B cell (primary cell): ENCODE measurements at regions of chr12 and their contacts with region 1.

Region 1: GRCh38 chr12:30847259-30847658 is 79.3 kb upstream of the TSPAN11 start:
- DNase-seq: peak; percentile 71
- ATAC-seq: no peak
- H3K4me3 ChIP-seq: no peak overlapping the region
- H3K4me3 Mint-ChIP-seq: no peak overlapping the region
- H3K27ac ChIP-seq: no peak overlapping the region
- H3K27ac Mint-ChIP-seq: no peak overlapping the region
- H3K4me1 ChIP-seq: peaks cover 5 to 16% of the 10 kb centered on the region in 2 donors
- H3K4me1 Mint-ChIP-seq: peaks cover 10% of the 10 kb centered on the region
- H3K27me3 ChIP-seq: no peaks in the 10 kb centered on the region
- H3K27me3 Mint-ChIP-seq: peaks cover 8% of the 10 kb centered on the region
- CTCF ChIP-seq: peak; percentile 81

Region 2: GRCh38 chr12:29380536-29381523 is 1466.4 kb before region 1 on chr12 and contains the start of gene ERGIC2:
- CTCF ChIA-PET with region 1: no interaction called
- POLR2A ChIA-PET with region 1: no interaction called
- intact Hi-C with region 1: loop called (anchors 1 kb)
- DNase-seq: peak; percentile 98
- ATAC-seq: peak; percentile 91
- H3K4me3 ChIP-seq: peak within 1 kb of the TSS; percentile 82 to 100 (median 99)
- H3K4me3 Mint-ChIP-seq: peak within 1 kb of the TSS; percentile 89
- H3K27ac ChIP-seq: peak within 1 kb of the TSS; percentile 86 to 88
- H3K27ac Mint-ChIP-seq: peak within 1 kb of the TSS; percentile 90
- H3K4me1 ChIP-seq: peaks cover 13 to 17% of the 10 kb centered on the region in 2 donors
- H3K4me1 Mint-ChIP-seq: peaks cover 35% of the 10 kb centered on the region
- H3K27me3 ChIP-seq: no peaks in the 10 kb centered on the region
- H3K27me3 Mint-ChIP-seq: peaks cover 8% of the 10 kb centered on the region
- CTCF ChIP-seq: no peak
- total RNA-seq, gene ERGIC2: 37.2 and 40.2 TPM in 2 replicates

Region 3: GRCh38 chr12:29552324-29552927 is 1294.8 kb before region 1 on chr12:
- CTCF ChIA-PET with region 1: interaction called, 6 read pairs
- POLR2A ChIA-PET with region 1: no interaction called
- intact Hi-C with region 1: loop called (anchors 1 kb)
- DNase-seq: peak; percentile 49
- ATAC-seq: peak; percentile 47
- H3K4me3 ChIP-seq: no peak overlapping the region
- H3K4me3 Mint-ChIP-seq: no peak overlapping the region
- H3K27ac ChIP-seq: no peak overlapping the region
- H3K27ac Mint-ChIP-seq: no peak overlapping the region
- H3K4me1 ChIP-seq: no peaks in the 10 kb centered on the region
- H3K4me1 Mint-ChIP-seq: no peaks in the 10 kb centered on the region
- H3K27me3 ChIP-seq: no peaks in the 10 kb centered on the region
- H3K27me3 Mint-ChIP-seq: peaks cover 7% of the 10 kb centered on the region
- CTCF ChIP-seq: peak; percentile 80

Region 4: DNA sequence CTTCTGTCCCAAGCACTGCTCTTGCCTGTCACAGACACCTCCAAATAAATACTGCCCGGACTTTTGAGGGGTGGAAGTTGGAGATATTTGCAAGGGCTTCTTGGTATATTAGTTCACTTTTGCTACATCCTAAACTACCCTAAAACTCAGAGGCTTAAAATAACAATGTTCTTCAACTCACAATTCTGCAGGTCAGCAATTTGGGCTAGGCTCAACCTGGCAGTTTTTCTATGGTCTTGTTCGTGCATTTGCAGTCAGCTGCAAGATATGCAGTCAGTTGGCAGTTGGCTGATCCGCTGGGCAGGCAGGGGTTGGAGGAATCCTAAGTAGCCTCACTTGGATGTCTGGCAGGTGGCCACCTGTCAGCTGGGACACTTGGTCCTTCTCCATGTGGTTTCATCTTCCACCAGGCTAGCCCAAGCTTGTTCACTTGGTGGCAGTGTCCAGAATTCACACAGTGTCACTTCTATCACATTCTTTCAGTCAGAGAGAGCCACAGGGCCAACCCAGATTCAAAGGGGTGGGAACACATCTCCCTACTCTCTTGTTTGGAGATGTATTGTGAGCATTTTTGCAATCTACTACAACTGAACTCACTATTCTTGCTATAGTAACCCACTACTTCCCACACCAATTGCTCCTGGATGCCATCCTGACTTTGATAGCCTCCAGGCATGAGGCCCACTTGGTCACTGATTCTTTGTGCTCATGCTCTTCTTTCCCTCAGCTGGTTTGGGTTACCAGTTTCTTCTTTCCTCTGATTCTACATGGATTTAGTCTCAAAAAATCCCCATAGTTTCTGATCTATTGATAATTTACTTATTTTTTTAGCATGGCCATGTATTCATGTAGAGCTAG is 64.7 kb before region 1 on chr12:
- CTCF ChIA-PET with region 1: no interaction called
- POLR2A ChIA-PET with region 1: no interaction called
- intact Hi-C with region 1: no loop called
- DNase-seq: no peak
- ATAC-seq: no peak
- H3K4me3 ChIP-seq: no peak overlapping the region
- H3K4me3 Mint-ChIP-seq: no peak overlapping the region
- H3K27ac ChIP-seq: no peak overlapping the region
- H3K27ac Mint-ChIP-seq: no peak overlapping the region
- H3K4me1 ChIP-seq: no peaks in the 10 kb centered on the region
- H3K4me1 Mint-ChIP-seq: no peaks in the 10 kb centered on the region
- H3K27me3 ChIP-seq: peaks cover 0 to 4% (median 0%) of the 10 kb centered on the region in 4 experiments
- H3K27me3 Mint-ChIP-seq: peaks cover 46% of the 10 kb centered on the region
- CTCF ChIP-seq: no peak

Region 5: DNA sequence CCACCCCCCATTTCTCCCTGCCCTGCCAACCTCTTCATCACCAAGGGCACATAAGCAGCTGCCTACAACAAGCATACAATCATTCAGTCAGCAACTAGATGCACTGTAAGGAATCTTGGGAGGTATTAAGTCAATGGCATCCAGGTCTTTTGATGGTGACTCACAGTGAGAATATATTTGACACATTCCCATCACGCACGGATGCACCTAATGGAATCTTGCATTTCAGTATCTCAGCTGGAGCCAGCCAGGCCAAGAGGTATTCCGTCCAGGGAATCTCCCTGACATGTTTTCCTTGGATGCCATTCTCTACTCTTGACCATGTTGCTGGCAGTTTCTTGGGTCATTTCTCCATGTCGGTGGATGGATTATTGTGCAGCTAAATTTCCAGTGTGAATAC is 18.6 kb before region 1 on chr12:
- CTCF ChIA-PET with region 1: no interaction called
- POLR2A ChIA-PET with region 1: no interaction called
- intact Hi-C with region 1: no loop called
- DNase-seq: no peak
- ATAC-seq: no peak
- H3K4me3 ChIP-seq: no peak overlapping the region
- H3K4me3 Mint-ChIP-seq: no peak overlapping the region
- H3K27ac ChIP-seq: no peak overlapping the region
- H3K27ac Mint-ChIP-seq: no peak overlapping the region
- H3K4me1 ChIP-seq: no peaks in the 10 kb centered on the region
- H3K4me1 Mint-ChIP-seq: no peaks in the 10 kb centered on the region
- H3K27me3 ChIP-seq: peaks cover 0 to 17% (median 7%) of the 10 kb centered on the region in 4 experiments
- H3K27me3 Mint-ChIP-seq: peaks cover 56% of the 10 kb centered on the region
- CTCF ChIP-seq: no peak

Region 6: DNA sequence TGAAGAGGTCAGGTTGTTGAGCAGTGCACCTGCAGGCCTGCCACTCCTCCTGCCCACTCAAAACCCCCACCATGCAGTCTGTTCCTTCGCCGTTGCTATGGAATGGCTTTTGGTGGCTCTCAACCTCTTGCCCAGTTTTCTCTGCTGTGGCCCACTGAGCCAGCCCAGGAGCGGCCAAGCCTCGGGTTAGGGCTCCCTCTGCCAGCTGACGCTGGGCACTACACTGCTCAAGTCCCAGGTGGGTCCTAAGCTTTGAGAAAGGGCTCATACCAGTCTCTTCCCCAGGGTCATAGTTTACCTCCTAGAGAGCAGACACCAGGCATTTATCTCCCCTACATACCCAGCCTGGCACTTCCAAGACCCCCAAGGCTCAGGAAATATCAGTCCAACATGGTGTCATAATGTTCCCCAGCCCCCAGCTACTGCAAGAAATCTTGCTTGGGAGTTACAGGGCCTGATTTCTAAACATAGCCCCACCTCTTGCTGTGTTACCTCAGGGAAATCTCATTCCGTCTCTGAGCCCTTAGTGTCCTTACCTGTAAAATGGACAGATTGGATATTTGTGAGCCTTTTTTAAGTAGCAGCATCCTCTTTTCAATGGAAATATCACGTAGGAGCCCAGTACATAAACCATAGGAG is 138.7 kb after region 1 on chr12:
- CTCF ChIA-PET with region 1: interaction called, 24 read pairs
- POLR2A ChIA-PET with region 1: no interaction called
- intact Hi-C with region 1: no loop called
- DNase-seq: peak; percentile 20
- ATAC-seq: no peak
- H3K4me3 ChIP-seq: no peak overlapping the region
- H3K4me3 Mint-ChIP-seq: no peak overlapping the region
- H3K27ac ChIP-seq: no peak overlapping the region
- H3K27ac Mint-ChIP-seq: no peak overlapping the region
- H3K4me1 ChIP-seq: no peaks in the 10 kb centered on the region
- H3K4me1 Mint-ChIP-seq: no peaks in the 10 kb centered on the region
- H3K27me3 ChIP-seq: no peaks in the 10 kb centered on the region
- H3K27me3 Mint-ChIP-seq: no peaks in the 10 kb centered on the region
- CTCF ChIP-seq: peak; percentile 24

Region 7: GRCh38 chr12:31238764-31239387 is 391.6 kb after region 1 on chr12:
- CTCF ChIA-PET with region 1: interaction called, 50 read pairs
- POLR2A ChIA-PET with region 1: no interaction called
- intact Hi-C with region 1: no loop called
- DNase-seq: peak; percentile 71
- ATAC-seq: peak; percentile 64
- H3K4me3 ChIP-seq: no peak overlapping the region
- H3K4me3 Mint-ChIP-seq: no peak overlapping the region
- H3K27ac ChIP-seq: no peak overlapping the region
- H3K27ac Mint-ChIP-seq: no peak overlapping the region
- H3K4me1 ChIP-seq: no peaks in the 10 kb centered on the region
- H3K4me1 Mint-ChIP-seq: peaks cover 9% of the 10 kb centered on the region
- H3K27me3 ChIP-seq: peaks cover 0 to 4% (median 0%) of the 10 kb centered on the region in 4 experiments
- H3K27me3 Mint-ChIP-seq: peaks cover 25% of the 10 kb centered on the region
- CTCF ChIP-seq: peak; percentile 80